ENCODE measurements at regions of chr12 and their contacts with region 1.

Region 1: GRCh38 chr12:71685914-71686665 is at the start of gene TMEM19:
- DNase-seq: peak; percentile 78 to 88 (median 86)
- ATAC-seq: peak; percentile 90
- H3K4me3 ChIP-seq: peak within 1 kb of the TSS; percentile 96
- H3K4me3 Mint-ChIP-seq: peak within 1 kb of the TSS; percentile 85 to 99 (median 94)
- H3K27ac ChIP-seq: peak within 1 kb of the TSS; percentile 87
- H3K27ac Mint-ChIP-seq: peak within 1 kb of the TSS; percentile 85 to 97 (median 91)
- H3K4me1 ChIP-seq: peaks cover 21 to 23% of the 10 kb centered on the region in 2 donors
- H3K4me1 Mint-ChIP-seq: peaks cover 15 to 55% (median 38%) of the 10 kb centered on the region in 7 donors
- H3K27me3 ChIP-seq: no peaks in the 10 kb centered on the region
- H3K27me3 Mint-ChIP-seq: no peaks in the 10 kb centered on the region
- total RNA-seq, gene TMEM19: 13.9 to 17.7 (median 14.7) TPM

Region 2: DNA sequence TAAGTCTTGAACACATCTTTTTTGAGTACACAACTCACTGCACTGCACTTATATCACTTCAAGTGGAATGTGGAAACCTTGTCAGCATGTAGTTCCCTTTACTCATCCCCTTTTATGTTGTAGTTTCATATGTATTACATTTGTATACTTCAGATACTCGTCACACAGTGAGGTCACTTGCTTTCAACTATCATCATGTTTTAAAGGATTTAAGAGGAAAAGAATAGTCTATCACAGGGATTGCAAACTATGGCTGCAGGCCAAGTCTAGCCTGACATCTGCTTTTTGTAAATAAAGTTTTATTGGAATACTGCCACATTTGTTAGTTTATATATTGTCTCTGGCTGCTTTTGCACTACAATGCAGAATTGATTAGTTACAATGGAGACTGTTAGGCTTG is 1418.5 kb before region 1 on chr12:
- CTCF ChIA-PET with region 1: no interaction called
- POLR2A ChIA-PET with region 1: no interaction called
- intact Hi-C with region 1: no loop called
- DNase-seq: no peak
- ATAC-seq: no peak
- H3K4me3 ChIP-seq: no peak overlapping the region
- H3K4me3 Mint-ChIP-seq: peak overlapping the region in 6 of 10 donors; percentile 6 to 57 (median 30)
- H3K27ac ChIP-seq: no peak overlapping the region
- H3K27ac Mint-ChIP-seq: peak overlapping the region in 5 of 9 donors; percentile 6 to 39 (median 17)
- H3K4me1 ChIP-seq: peaks cover 23 to 43% of the 10 kb centered on the region in 2 donors
- H3K4me1 Mint-ChIP-seq: peaks cover 31 to 97% (median 89%) of the 10 kb centered on the region in 7 donors
- H3K27me3 ChIP-seq: no peaks in the 10 kb centered on the region
- H3K27me3 Mint-ChIP-seq: no peaks in the 10 kb centered on the region

Region 3: DNA sequence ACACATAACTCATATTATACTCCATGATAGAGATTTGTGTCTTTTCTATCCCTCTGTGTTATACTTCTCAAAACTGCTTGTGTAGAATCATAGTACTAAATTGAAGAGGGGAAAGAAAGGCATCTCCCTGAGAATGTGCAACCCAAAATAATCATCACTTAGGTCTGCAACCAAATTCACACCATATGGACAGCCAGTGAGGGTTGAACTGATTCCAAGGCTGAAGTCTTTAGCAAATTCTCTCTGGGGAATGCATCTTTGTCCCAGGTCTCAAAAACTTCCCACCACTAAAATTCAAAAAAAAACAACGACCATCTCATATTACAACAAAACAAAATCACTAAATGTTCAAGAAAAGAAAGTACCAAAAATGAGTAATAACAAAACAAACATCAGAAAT is 33.4 kb before region 1 on chr12:
- CTCF ChIA-PET with region 1: no interaction called
- POLR2A ChIA-PET with region 1: interaction called, 4 read pairs
- intact Hi-C with region 1: loop called in 1 of 2 experiments (anchors 5 kb)
- DNase-seq: no peak
- ATAC-seq: no peak
- H3K4me3 ChIP-seq: no peak overlapping the region
- H3K4me3 Mint-ChIP-seq: no peak overlapping the region
- H3K27ac ChIP-seq: no peak overlapping the region
- H3K27ac Mint-ChIP-seq: no peak overlapping the region
- H3K4me1 ChIP-seq: peaks cover 31 to 35% of the 10 kb centered on the region in 2 donors
- H3K4me1 Mint-ChIP-seq: peaks cover 28 to 58% (median 42%) of the 10 kb centered on the region in 7 donors
- H3K27me3 ChIP-seq: no peaks in the 10 kb centered on the region
- H3K27me3 Mint-ChIP-seq: no peaks in the 10 kb centered on the region

Measured in naive thymus-derived CD4-positive, alpha-beta T cell (primary cell).